AG04449 (cell line): ENCODE measurements at regions of chr4 and their contacts with region 1.

Region 1: GRCh38 chr4:182938205-182938645 is 21.0 kb upstream of the DCTD start:
- DNase-seq: no peak
- H3K4me3 ChIP-seq: no peak overlapping the region
- CTCF ChIP-seq: peak; percentile 95

Region 2: DNA sequence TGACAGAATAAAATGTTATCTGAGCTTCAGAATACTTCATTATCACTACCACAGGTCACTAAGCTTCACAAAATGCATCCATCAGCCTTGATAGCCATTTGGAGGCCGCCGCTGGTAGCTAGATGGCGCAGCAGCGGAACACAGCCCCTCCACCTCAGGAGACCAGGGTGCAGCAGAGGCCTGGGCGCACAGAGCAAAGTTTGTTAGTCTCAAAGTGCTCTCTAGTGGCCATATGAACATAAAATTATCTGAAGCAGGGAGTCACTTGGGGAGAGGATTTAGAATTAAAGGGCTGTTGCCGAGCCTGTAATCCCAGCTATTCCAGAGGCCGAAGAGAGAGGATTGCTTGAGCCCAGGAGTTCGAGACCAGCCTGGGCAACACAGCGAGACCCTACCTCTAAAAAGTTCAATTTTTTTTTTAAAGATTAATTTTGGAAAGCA is 12.9 kb before region 1 on chr4:
- CTCF ChIA-PET with region 1: interaction called, 84 read pairs
- POLR2A ChIA-PET with region 1: no interaction called
- DNase-seq: no peak
- H3K4me3 ChIP-seq: no peak overlapping the region
- CTCF ChIP-seq: peak; percentile 47

Region 3: DNA sequence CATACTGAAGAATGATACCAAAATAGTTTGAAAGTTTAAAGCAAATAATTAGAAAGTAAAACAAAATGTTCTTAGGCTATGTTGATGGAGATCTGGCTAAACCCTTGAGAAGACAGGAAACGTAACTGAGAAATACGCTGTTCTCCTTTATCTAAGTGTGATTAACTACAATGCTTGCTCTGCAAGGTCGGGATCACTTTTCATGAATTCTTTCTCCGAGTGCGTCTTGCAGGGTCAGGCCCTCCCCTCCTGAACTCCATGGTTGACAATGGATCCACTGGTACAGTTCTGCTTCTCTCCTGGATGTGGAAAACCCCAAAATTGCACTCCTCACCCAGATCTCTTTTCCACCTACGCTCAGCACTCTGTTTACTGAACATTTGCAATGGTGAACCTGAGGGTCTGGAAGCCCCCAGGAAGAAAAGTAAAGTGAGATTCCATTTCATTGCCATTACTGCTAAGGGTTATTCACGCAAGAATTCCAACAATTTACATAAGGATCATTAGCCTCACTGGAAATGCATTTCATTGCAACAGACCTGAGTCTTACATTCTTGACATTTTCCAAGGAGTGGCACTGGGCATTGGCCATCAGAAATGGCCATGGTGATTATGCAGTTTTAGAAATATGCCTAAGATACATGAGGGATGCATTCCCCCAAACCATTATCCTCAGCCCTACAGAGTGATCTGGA is 136.2 kb after region 1 on chr4:
- CTCF ChIA-PET with region 1: interaction called, 64 read pairs
- POLR2A ChIA-PET with region 1: no interaction called
- DNase-seq: no peak
- H3K4me3 ChIP-seq: no peak overlapping the region
- CTCF ChIP-seq: no peak

Region 4: DNA sequence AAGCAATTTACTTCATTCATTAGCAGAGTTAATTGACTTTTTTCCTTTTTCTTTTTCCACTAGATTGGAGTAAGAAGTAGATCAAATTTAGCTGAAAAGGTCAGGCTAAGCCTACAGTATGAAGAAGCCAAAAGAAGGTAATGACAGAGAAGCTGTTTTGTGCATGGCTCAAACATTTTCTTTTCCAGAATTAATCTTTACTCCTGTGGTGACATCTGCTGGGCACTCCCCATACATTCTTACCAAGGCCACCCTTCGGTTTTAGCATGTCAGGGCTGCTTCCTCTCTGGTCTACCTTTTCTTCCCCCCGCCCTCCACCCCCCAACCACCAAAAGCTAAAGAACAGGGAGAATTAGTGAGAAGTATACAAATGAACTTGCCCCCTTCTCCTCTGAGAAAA is 311.6 kb after region 1 on chr4:
- CTCF ChIA-PET with region 1: interaction called, 313 read pairs
- POLR2A ChIA-PET with region 1: no interaction called
- DNase-seq: no peak
- H3K4me3 ChIP-seq: no peak overlapping the region
- CTCF ChIP-seq: peak; percentile 43